ENCODE measurements at regions of chr11 and their contacts with region 1.

Region 1: GRCh38 chr11:58675334-58676155 is 53.1 kb downstream of the CNTF start:
- DNase-seq: no peak
- ATAC-seq: peak; percentile 98
- H3K4me3 ChIP-seq: peak overlapping the region in 1 of 2 experiments; percentile 19; a peak in 1 of 4 replicates
- H3K27ac ChIP-seq: no peak overlapping the region
- H3K4me1 ChIP-seq: no peaks in the 10 kb centered on the region
- H3K27me3 ChIP-seq: no peaks in the 10 kb centered on the region; the same call in 1 of the 2 replicates
- CTCF ChIP-seq: peak; percentile 97

Region 2: DNA sequence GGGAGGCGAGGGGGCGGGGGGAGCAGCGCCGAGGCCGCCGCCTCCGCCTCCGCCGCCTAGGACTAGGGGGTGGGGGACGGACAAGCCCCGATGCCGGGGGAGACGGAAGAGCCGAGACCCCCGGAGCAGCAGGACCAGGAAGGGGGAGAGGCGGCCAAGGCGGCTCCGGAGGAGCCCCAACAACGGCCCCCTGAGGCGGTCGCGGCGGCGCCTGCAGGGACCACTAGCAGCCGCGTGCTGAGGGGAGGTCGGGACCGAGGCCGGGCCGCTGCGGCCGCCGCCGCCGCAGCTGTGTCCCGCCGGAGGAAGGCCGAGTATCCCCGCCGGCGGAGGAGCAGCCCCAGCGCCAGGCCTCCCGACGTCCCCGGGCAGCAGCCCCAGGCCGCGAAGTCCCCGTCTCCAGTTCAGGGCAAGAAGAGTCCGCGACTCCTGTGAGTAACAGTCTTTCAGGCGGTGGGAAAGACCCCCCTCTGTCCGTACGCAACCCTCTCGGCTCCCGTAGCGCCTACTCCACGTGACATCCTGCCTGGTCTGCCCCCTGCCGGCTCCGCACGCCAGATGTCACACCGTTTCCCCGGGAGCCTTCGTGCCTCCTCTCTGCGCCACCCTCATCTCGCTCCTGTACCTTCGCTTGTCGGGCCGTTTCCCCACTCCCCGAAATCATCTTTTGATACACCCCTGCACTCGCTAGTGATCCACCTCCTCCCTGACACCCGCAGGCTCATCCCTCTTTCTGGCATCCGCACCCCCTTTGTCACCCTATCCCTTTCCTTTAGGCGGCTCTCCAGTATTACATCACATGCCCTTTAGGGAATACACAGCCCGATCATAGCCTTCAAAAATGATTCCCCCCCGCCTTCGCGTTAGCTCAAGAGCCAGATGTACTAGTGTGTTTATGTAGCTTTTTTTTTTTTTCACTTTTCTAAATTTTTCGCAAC is 96.1 kb before region 1 on chr11:
- CTCF ChIA-PET with region 1: no interaction called
- POLR2A ChIA-PET with region 1: no interaction called
- in situ Hi-C with region 1: no loop called
- intact Hi-C with region 1: loop called (anchors 10 kb)
- DNase-seq: peak; percentile 73
- ATAC-seq: peak; percentile 74
- H3K4me3 ChIP-seq: peak overlapping the region; percentile 92 to 94
- H3K27ac ChIP-seq: peak overlapping the region; percentile 95
- H3K4me1 ChIP-seq: peaks cover 42% of the 10 kb centered on the region
- H3K27me3 ChIP-seq: no peaks in the 10 kb centered on the region
- CTCF ChIP-seq: peak; percentile 82

Region 3: DNA sequence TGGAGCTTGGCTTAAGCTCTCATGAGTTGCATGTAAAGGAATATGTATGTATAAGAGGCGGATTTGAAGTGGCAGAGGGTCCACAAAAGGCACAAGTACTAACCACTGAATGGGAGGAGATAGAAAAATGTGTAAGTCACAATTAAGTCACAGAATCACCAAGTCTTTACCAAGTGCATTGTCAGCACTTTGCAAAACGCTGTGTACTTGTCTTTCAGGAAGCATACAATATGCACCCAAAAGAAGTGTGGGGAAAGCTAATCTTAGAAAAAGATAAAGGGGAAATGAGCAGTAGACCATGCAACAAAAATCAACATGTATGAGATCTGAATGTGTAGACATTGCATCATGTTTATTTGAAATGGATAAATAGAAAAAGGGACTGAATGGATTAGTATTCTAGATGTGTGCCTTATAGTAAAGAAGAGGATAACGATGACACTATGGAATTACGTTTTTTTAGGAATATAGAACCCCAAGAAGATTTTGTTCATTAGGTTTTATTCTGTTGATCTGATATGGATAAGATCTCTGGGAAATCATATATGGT is 48.5 kb before region 1 on chr11:
- CTCF ChIA-PET with region 1: no interaction called
- POLR2A ChIA-PET with region 1: interaction called, 10 read pairs
- in situ Hi-C with region 1: no loop called
- intact Hi-C with region 1: no loop called
- DNase-seq: no peak
- ATAC-seq: no peak
- H3K4me3 ChIP-seq: no peak overlapping the region
- H3K27ac ChIP-seq: no peak overlapping the region
- H3K4me1 ChIP-seq: no peaks in the 10 kb centered on the region
- H3K27me3 ChIP-seq: no peaks in the 10 kb centered on the region
- CTCF ChIP-seq: no peak

Region 4: GRCh38 chr11:58900479-58901420 is 225.2 kb after region 1 on chr11:
- CTCF ChIA-PET with region 1: no interaction called
- POLR2A ChIA-PET with region 1: no interaction called
- in situ Hi-C with region 1: no loop called
- intact Hi-C with region 1: loop called (anchors 5 kb)
- DNase-seq: peak; percentile 32
- ATAC-seq: peak; percentile 80
- H3K4me3 ChIP-seq: peak overlapping the region in 1 of 2 experiments; percentile 24; a peak in 2 of 4 replicates
- H3K27ac ChIP-seq: no peak overlapping the region
- H3K4me1 ChIP-seq: no peaks in the 10 kb centered on the region
- H3K27me3 ChIP-seq: no peaks in the 10 kb centered on the region; the same call in none of the 2 replicates
- CTCF ChIP-seq: peak; percentile 74

Measured in Panc1 (cell line).